ENCODE measurements at regions of chr1 and their contacts with region 1.

Region 1: GRCh38 chr1:235160957-235161684 is at the start of gene RBM34:
- DNase-seq: peak; percentile 65
- ATAC-seq: peak; percentile 96
- H3K4me3 ChIP-seq: peak within 1 kb of the TSS; percentile 82
- H3K27ac ChIP-seq: peak within 1 kb of the TSS; percentile 98
- H3K4me1 ChIP-seq: peaks cover 3% of the 10 kb centered on the region; the same call in 1 of the 2 replicates
- H3K27me3 ChIP-seq: no peaks in the 10 kb centered on the region
- CTCF ChIP-seq: peak in 2 of 3 experiments; percentile 19 to 23; a peak in 1 of 6 replicates
- EP300 ChIP-seq: no peak
- POLR2A ChIP-seq: peak; percentile 98
- RAD21 ChIP-seq: no peak
- polyA plus RNA-seq, gene RBM34: 98.2 to 124 TPM

Region 2: DNA sequence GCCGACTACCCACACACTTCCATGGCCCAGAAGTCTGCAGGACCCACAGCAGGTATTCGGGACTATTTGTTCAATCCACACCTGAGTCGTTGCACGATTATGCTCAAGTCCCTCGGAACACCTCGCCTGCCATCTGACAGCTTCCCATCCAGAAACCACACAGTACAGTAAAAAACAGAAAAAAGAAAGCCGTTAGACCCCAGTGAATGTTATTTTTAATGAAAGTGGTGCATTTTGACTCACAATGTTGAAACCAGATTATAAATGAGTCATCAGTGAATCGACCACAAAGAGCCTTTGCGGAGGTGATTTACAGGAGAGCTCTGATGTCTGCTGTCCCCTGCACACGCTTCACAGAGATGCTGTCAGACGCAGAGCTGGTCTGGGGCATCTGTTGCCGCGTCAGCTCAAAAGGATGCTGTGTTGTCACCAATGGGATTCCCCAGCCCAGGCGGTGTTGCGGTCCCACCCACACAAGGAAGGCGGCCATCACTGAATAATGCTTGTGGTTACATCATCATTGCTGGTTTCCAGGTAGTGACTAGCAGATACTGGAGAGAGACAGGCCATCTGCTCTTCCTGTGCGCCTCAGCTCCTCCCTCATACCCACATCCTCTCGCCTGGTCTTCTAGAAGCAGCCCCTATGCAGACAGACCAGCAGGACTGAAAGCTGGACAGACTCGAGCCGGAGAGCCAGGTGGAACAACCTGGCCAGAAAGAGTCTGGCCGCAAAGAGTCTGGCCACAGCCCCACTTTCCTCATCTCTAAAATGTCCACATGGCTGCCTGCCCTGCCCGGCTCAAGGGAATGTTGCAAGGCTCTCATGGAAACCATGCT is 149.3 kb before region 1 on chr1:
- CTCF ChIA-PET with region 1: no interaction called
- POLR2A ChIA-PET with region 1: no interaction called
- RAD21 ChIA-PET with region 1: no interaction called
- SMC1A ChIA-PET with region 1: no interaction called
- in situ Hi-C with region 1: no loop called
- intact Hi-C with region 1: no loop called
- DNase-seq: peak; percentile 100
- ATAC-seq: peak; percentile 75
- H3K4me3 ChIP-seq: peak overlapping the region; percentile 46; the same call in 1 of the 2 replicates
- H3K27ac ChIP-seq: peak overlapping the region; percentile 99
- H3K4me1 ChIP-seq: peaks cover 86% of the 10 kb centered on the region
- H3K27me3 ChIP-seq: no peaks in the 10 kb centered on the region
- CTCF ChIP-seq: no peak
- EP300 ChIP-seq: peak; percentile 100
- POLR2A ChIP-seq: peak; percentile 81
- RAD21 ChIP-seq: peak; percentile 30

Region 3: GRCh38 chr1:235113183-235113917 is 47.8 kb before region 1 on chr1:
- CTCF ChIA-PET with region 1: no interaction called
- POLR2A ChIA-PET with region 1: no interaction called
- RAD21 ChIA-PET with region 1: no interaction called
- SMC1A ChIA-PET with region 1: no interaction called
- in situ Hi-C with region 1: no loop called
- intact Hi-C with region 1: no loop called
- DNase-seq: no peak
- ATAC-seq: no peak
- H3K4me3 ChIP-seq: no peak overlapping the region
- H3K27ac ChIP-seq: no peak overlapping the region
- H3K4me1 ChIP-seq: no peaks in the 10 kb centered on the region
- H3K27me3 ChIP-seq: no peaks in the 10 kb centered on the region
- CTCF ChIP-seq: no peak
- EP300 ChIP-seq: no peak
- POLR2A ChIP-seq: no peak; the same call in 1 of the 2 replicates
- RAD21 ChIP-seq: no peak

Region 4: DNA sequence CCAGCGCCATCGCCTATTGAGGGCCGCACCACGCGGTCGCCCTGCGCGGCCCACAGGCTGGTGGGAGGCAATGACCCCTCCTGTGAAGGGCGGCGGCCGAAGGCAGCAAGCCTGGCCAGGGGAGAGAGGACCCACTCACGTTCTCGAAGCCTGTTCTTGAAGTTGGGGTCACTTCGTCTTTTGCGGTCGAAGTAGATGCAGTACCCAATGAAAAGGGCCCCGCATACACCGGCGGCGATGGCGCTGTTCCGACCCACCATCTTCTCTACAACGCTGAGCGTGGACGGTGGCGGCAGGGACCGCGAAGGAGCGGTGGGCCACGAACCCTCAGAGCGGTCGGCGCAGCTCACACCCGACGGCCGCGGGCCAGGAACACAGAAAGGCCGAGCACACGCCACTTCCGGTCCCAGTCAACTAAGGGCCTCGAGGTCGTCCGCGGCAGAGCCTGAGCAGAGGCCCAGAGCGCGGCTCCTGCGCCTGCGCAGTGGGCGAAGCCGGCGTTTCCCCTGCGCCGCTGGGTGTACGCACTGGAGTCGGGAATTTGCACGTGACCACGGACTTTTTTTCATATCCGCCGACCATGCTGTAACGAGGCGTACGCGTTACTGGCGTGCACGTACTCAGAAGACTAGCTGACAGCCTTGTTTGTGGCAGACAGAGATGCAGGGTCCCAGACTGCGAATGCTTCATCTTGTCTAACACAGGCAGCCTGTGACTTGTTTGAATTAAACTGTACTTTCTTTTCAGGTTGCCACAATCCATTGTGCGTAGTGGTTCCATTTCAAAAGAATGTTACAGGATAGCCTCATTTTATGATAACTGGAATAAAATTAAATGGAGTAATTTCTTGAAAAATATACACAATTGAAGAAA is 32.4 kb before region 1 on chr1 and contains the start of gene TOMM20:
- CTCF ChIA-PET with region 1: interaction called, 6 read pairs
- POLR2A ChIA-PET with region 1: interaction called, 6 read pairs
- RAD21 ChIA-PET with region 1: no interaction called
- SMC1A ChIA-PET with region 1: no interaction called
- in situ Hi-C with region 1: no loop called
- intact Hi-C with region 1: loop called (anchors 2 kb)
- DNase-seq: peak; percentile 95
- ATAC-seq: peak; percentile 92
- H3K4me3 ChIP-seq: peak within 1 kb of the TSS; percentile 90
- H3K27ac ChIP-seq: peak within 1 kb of the TSS; percentile 90
- H3K4me1 ChIP-seq: 0 out of 2 replicates have a peak, but pooled peaks cover 3% of the 10 kb centered on the region
- H3K27me3 ChIP-seq: no peaks in the 10 kb centered on the region
- CTCF ChIP-seq: no peak
- EP300 ChIP-seq: no peak
- POLR2A ChIP-seq: peak; percentile 99
- RAD21 ChIP-seq: no peak
- polyA plus RNA-seq, gene TOMM20: 39.8 to 60.1 TPM

Region 5: DNA sequence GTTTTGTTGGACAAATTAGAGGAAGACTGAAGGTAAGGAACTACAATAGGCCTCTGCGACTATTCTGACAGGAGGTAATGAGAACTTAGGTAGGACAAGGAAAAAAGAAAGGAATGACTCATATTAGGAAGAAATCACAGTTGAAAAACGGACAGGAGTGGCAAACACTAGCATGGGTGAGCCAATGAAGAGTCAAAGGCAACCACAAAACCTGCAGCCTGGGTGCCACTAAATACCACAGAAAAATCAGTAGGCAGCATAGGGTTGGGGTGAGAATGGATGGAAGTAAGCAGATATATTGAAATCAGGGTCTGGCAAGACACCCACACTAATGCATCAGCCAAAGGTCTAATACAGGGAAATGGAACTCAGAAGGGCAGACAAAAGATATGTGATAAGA is 10.1 kb before region 1 on chr1:
- CTCF ChIA-PET with region 1: interaction called, 4 read pairs
- POLR2A ChIA-PET with region 1: interaction called, 6 read pairs
- RAD21 ChIA-PET with region 1: no interaction called
- SMC1A ChIA-PET with region 1: interaction called, 11 read pairs
- in situ Hi-C with region 1: no loop called
- intact Hi-C with region 1: no loop called
- DNase-seq: no peak
- ATAC-seq: peak; percentile 17; the same call in 1 of the 3 replicates
- H3K4me3 ChIP-seq: no peak overlapping the region
- H3K27ac ChIP-seq: no peak overlapping the region
- H3K4me1 ChIP-seq: peaks cover 8% of the 10 kb centered on the region; the same call in 1 of the 2 replicates
- H3K27me3 ChIP-seq: no peaks in the 10 kb centered on the region
- CTCF ChIP-seq: no peak
- EP300 ChIP-seq: no peak
- POLR2A ChIP-seq: no peak
- RAD21 ChIP-seq: no peak

Region 6: GRCh38 chr1:235215453-235215852 is 54.3 kb after region 1 on chr1:
- CTCF ChIA-PET with region 1: no interaction called
- POLR2A ChIA-PET with region 1: no interaction called
- RAD21 ChIA-PET with region 1: no interaction called
- SMC1A ChIA-PET with region 1: no interaction called
- in situ Hi-C with region 1: no loop called
- intact Hi-C with region 1: no loop called
- DNase-seq: no peak
- ATAC-seq: no peak
- H3K4me3 ChIP-seq: no peak overlapping the region
- H3K27ac ChIP-seq: no peak overlapping the region
- H3K4me1 ChIP-seq: peaks cover 5% of the 10 kb centered on the region; the same call in 1 of the 2 replicates
- H3K27me3 ChIP-seq: no peaks in the 10 kb centered on the region
- CTCF ChIP-seq: no peak
- EP300 ChIP-seq: no peak
- POLR2A ChIP-seq: no peak
- RAD21 ChIP-seq: no peak

Measured in GM12878 (cell line).